PC-3 (cell line): ENCODE measurements at regions of chr15 and their contacts with region 1.

Region 1: DNA sequence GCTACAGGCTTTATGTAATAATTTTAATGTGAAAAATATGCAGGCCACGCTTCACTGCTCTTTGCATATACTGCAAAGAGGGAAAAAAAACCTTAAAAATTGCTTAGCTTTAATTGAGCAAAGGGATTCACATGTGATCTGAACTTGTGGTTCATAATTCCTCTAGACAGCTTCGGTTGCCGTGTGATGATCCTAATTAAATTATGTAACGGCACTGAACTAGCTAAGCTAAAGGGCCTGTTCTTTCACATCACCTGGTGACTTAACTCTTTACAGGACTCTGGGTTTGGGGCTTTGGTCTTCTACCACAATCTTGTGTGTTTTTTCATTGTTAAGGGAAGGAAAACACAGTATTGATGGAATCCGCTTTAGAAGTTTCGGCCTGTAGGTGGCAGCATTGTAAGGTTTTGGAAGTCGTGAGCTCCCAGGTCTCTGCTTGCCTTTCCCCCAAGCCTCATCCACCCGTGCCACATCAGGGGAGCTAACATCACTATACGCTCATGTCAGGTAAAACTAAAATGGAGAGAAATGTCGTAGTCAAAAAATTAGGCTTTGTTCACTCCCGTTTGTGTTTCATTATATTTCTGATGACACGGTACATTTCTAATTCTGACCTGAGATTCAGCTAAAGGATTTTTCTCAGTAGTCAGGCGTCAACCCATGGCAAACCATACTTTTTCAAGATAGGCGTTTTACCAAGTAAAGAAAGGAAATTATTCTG is 205.6 kb upstream of the DPH6 start:
- DNase-seq: peak; percentile 85
- ATAC-seq: peak; percentile 69
- H3K4me3 ChIP-seq: 0 out of 2 replicates have a peak overlapping the region, but pooled peaks have one; percentile 11
- H3K27ac ChIP-seq: no peak overlapping the region
- H3K4me1 ChIP-seq: peaks cover 36% of the 10 kb centered on the region
- H3K27me3 ChIP-seq: no peaks in the 10 kb centered on the region
- CTCF ChIP-seq: peak; percentile 88

Region 2: GRCh38 chr15:34360310-34360709 is 1391.3 kb before region 1 on chr15:
- CTCF ChIA-PET with region 1: interaction called, 19 read pairs
- POLR2A ChIA-PET with region 1: no interaction called
- intact Hi-C with region 1: no loop called
- DNase-seq: peak; percentile 98
- ATAC-seq: peak; percentile 65
- H3K4me3 ChIP-seq: no peak overlapping the region
- H3K27ac ChIP-seq: peak overlapping the region; percentile 49
- H3K4me1 ChIP-seq: peaks cover 50% of the 10 kb centered on the region
- H3K27me3 ChIP-seq: no peaks in the 10 kb centered on the region
- CTCF ChIP-seq: peak; percentile 34

Region 3: GRCh38 chr15:35519541-35520149 is 231.9 kb before region 1 on chr15:
- CTCF ChIA-PET with region 1: interaction called, 6 read pairs
- POLR2A ChIA-PET with region 1: no interaction called
- intact Hi-C with region 1: loop called (anchors 5 kb)
- DNase-seq: peak; percentile 69
- ATAC-seq: peak; percentile 81
- H3K4me3 ChIP-seq: no peak overlapping the region
- H3K27ac ChIP-seq: no peak overlapping the region
- H3K4me1 ChIP-seq: no peaks in the 10 kb centered on the region
- H3K27me3 ChIP-seq: no peaks in the 10 kb centered on the region
- CTCF ChIP-seq: peak; percentile 89

Region 4: GRCh38 chr15:35784745-35785144 is 33.2 kb after region 1 on chr15:
- CTCF ChIA-PET with region 1: no interaction called
- POLR2A ChIA-PET with region 1: no interaction called
- intact Hi-C with region 1: no loop called
- DNase-seq: no peak
- ATAC-seq: no peak
- H3K4me3 ChIP-seq: no peak overlapping the region
- H3K27ac ChIP-seq: no peak overlapping the region
- H3K4me1 ChIP-seq: peaks cover 15% of the 10 kb centered on the region
- H3K27me3 ChIP-seq: no peaks in the 10 kb centered on the region
- CTCF ChIP-seq: no peak

Region 5: GRCh38 chr15:35827141-35827540 is 75.6 kb after region 1 on chr15:
- CTCF ChIA-PET with region 1: no interaction called
- POLR2A ChIA-PET with region 1: no interaction called
- intact Hi-C with region 1: no loop called
- DNase-seq: no peak
- ATAC-seq: no peak
- H3K4me3 ChIP-seq: no peak overlapping the region
- H3K27ac ChIP-seq: no peak overlapping the region
- H3K4me1 ChIP-seq: no peaks in the 10 kb centered on the region
- H3K27me3 ChIP-seq: no peaks in the 10 kb centered on the region
- CTCF ChIP-seq: no peak

Region 6: DNA sequence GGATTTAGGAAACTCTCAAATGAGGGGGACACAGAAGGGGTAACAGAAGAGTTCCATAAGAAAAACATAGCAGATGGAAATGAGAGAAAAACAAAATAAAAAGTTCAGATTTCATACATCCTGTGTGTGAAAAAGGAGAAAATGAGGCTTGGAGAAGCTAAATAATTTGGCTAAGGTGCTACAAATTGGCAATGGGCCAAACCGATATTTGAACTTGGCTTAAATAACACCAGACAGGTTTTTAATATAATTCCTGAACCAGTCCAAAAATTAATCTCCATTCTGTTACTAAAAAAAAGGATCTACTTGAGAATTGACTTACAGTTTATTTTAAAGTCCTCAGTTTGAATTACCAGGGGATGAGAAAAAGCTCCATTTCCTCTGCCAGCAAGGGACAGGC is 137.2 kb after region 1 on chr15:
- CTCF ChIA-PET with region 1: no interaction called
- POLR2A ChIA-PET with region 1: no interaction called
- intact Hi-C with region 1: loop called (anchors 1 kb)
- DNase-seq: peak; percentile 20
- ATAC-seq: no peak
- H3K4me3 ChIP-seq: no peak overlapping the region
- H3K27ac ChIP-seq: no peak overlapping the region
- H3K4me1 ChIP-seq: peaks cover 18% of the 10 kb centered on the region
- H3K27me3 ChIP-seq: no peaks in the 10 kb centered on the region
- CTCF ChIP-seq: no peak

Region 7: DNA sequence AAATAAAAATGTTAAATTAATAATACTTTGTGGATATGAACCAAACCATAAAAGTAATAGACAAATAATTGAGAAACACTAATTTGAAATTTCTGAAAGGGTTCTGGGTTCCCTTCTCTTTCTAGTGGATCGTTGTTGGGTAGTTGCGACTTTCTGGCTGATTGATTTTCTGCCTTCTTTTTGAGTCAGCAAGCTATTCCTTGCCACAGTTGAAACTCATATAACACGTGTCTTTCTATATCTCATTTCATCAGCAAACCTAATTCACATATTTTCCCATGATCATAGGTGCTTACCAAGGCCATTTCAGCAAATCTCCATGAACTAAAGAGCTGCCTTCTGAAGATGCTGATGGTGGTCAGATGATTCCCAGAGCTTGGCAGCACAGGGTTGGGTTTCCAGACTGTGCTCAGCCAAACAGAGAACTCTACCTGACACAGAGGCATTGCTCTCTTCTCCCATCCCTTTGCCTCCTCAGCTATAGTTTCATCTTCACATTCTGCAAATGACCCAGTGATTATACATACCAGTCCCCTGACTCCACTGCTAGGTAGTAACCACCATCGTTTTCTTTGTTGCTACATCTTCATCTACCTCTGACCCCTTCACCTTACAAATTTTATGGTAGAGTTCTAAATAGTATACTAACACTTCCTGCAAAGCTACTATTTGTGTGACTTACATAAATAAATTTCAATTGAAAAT is 178.3 kb after region 1 on chr15:
- CTCF ChIA-PET with region 1: no interaction called
- POLR2A ChIA-PET with region 1: no interaction called
- intact Hi-C with region 1: no loop called
- DNase-seq: no peak
- ATAC-seq: no peak
- H3K4me3 ChIP-seq: no peak overlapping the region
- H3K27ac ChIP-seq: no peak overlapping the region
- H3K4me1 ChIP-seq: peaks cover 5% of the 10 kb centered on the region
- H3K27me3 ChIP-seq: no peaks in the 10 kb centered on the region
- CTCF ChIP-seq: no peak

Region 8: GRCh38 chr15:35958021-35958420 is 206.4 kb after region 1 on chr15:
- CTCF ChIA-PET with region 1: no interaction called
- POLR2A ChIA-PET with region 1: no interaction called
- intact Hi-C with region 1: no loop called
- DNase-seq: peak; percentile 48
- ATAC-seq: peak; percentile 85
- H3K4me3 ChIP-seq: no peak overlapping the region
- H3K27ac ChIP-seq: no peak overlapping the region
- H3K4me1 ChIP-seq: peaks cover 10% of the 10 kb centered on the region; the same call in 1 of the 2 replicates
- H3K27me3 ChIP-seq: no peaks in the 10 kb centered on the region
- CTCF ChIP-seq: no peak

Region 9: DNA sequence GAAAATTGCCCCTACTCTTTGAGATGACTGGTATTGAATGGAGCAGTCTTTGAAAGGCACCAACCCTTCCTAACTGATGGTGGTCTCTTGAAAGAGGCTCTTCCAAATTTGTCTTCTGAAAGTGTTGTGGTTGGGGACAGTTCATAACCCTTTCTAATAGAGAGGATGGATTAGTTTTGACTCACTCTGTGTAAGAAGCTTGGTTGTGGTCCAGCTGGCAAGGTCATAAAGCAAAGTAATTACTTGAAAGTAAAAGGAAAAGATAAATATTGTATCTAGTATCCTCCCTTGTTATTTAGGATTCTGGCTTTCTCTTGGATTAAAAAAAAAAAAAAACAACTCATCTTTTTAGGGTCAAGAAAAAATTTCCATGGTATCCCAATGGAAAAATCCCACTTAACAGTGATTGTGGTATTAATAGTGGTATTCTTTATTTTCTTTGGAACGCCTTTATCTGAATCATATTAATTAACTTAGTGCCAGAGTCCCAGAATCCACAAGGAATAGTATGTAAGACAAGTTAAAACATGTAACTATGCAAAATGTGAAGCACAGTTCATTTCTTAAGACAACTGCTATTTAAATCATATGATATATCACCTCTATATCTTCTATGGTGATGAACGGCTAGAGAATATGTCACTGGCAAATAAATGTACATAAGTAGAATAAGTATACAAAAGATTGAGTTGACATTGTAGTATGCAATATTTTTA is 358.5 kb after region 1 on chr15:
- CTCF ChIA-PET with region 1: no interaction called
- POLR2A ChIA-PET with region 1: no interaction called
- intact Hi-C with region 1: loop called (anchors 10 kb)
- DNase-seq: peak; percentile 67
- ATAC-seq: peak; percentile 87
- H3K4me3 ChIP-seq: no peak overlapping the region
- H3K27ac ChIP-seq: no peak overlapping the region
- H3K4me1 ChIP-seq: peaks cover 14% of the 10 kb centered on the region
- H3K27me3 ChIP-seq: no peaks in the 10 kb centered on the region
- CTCF ChIP-seq: no peak

Region 10: GRCh38 chr15:36334059-36334458 is 582.5 kb after region 1 on chr15:
- CTCF ChIA-PET with region 1: no interaction called
- POLR2A ChIA-PET with region 1: no interaction called
- intact Hi-C with region 1: loop called (anchors 10 kb)
- DNase-seq: peak; percentile 58
- ATAC-seq: no peak; the same call in 1 of the 2 replicates
- H3K4me3 ChIP-seq: no peak overlapping the region
- H3K27ac ChIP-seq: peak overlapping the region; percentile 96
- H3K4me1 ChIP-seq: peaks cover 34% of the 10 kb centered on the region
- H3K27me3 ChIP-seq: no peaks in the 10 kb centered on the region
- CTCF ChIP-seq: no peak